WTC11 (cell line): ENCODE measurements at regions of chr19 and their contacts with region 1.

Region 1: DNA sequence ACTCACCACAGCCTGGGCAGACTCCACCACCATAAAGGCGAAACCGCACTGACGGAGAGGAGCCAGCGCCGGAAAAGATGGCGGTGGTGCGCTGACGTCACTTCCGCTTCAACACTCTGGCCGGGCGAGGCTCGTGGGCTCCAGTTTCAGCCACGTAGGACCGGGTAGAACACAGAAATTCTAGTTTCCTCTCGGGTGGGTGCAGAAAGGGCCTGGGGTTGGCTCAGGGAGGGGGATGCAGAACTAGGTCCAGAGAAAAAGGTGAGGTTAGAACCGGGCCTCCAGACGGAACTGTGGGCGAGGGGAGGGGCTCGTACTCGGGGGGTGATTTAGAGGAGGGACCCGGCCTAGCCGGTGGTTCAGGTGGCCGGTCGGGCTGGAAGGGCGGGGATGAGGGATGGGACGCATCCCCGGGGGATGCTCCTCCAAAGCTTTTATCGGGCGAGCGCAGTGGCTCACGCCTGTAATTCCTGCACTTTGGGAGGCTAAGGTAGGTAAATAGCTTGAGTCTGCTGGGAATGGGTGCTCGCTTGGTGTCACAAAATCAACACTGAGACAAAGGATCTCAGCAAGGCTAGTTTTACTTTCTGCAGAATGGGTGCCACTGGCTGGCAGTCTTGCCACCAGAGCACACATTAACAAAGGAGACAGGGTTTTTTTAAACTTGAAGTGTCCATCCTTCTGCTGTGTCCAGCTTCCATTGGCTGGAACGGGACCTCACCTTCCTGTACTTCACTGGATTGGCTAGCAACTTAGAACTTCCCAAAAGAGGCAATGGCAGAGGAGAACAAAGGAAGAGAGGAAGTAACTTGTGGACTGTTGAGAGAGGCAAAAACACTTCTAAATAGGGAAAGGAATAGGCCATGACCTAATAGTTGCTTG is at the start of gene ZNF561:
- DNase-seq: peak; percentile 79
- ATAC-seq: peak; percentile 75
- H3K4me3 Mint-ChIP-seq: peak within 1 kb of the TSS; percentile 94
- H3K27ac Mint-ChIP-seq: peak within 1 kb of the TSS; percentile 100
- H3K4me1 Mint-ChIP-seq: peaks cover 27% of the 10 kb centered on the region
- H3K27me3 Mint-ChIP-seq: no peaks in the 10 kb centered on the region
- CTCF ChIP-seq: no peak
- total RNA-seq, gene ZNF561: 39.2 to 67.9 TPM (median 40.7 TPM) in 3 replicates

Region 2: DNA sequence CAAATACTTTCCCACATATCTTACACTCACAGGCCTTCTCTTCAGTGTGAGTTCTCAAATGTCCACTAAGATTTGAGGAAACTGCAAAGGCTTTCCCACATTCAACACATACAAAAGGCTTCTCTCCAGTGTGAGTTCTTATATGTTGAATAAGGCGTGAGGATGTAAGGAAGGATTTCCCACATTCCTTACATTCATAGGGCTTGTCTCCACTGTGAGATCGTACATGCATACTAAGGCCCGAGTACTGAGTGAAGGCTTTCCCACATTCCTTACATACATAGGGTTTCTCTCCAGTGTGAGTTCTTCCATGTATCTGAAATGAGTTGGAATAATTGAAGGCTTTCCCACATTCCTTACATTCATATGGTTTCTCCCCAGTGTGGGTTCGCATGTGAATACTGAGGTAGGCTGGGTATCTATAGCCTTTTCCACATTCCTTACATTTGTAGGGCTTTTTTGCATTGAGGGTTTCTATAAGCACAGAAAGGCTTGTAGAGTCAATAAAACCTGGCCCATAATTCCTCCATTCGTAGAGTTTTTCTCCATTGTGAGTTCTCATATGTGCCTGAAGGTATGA is 92.5 kb before region 1 on chr19:
- CTCF ChIA-PET with region 1: no interaction called
- POLR2A ChIA-PET with region 1: no interaction called
- DNase-seq: no peak
- ATAC-seq: no peak
- H3K4me3 Mint-ChIP-seq: no peak overlapping the region
- H3K27ac Mint-ChIP-seq: no peak overlapping the region
- H3K4me1 Mint-ChIP-seq: no peaks in the 10 kb centered on the region
- H3K27me3 Mint-ChIP-seq: peaks cover 17% of the 10 kb centered on the region
- CTCF ChIP-seq: no peak

Region 3: DNA sequence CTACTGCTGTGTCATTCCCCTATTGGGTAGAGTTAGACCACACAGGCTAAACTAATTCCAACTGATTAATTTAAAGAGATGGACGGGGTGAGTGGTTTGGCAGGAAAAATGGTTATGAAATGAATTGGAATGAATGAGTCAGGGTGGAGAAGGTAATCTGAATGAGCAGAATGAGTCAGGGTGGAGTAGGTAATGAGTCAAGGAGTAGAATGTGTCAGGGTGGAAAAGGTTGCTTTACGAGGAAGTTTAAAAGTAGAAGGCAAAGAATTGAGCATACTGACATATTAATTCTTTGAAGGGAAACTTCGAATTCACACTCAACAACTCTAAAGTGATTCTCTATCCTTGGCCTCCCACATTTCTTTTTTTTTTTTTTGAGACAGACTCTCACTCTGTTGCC is 24.4 kb before region 1 on chr19:
- CTCF ChIA-PET with region 1: no interaction called
- POLR2A ChIA-PET with region 1: no interaction called
- DNase-seq: no peak
- ATAC-seq: no peak
- H3K4me3 Mint-ChIP-seq: no peak overlapping the region
- H3K27ac Mint-ChIP-seq: no peak overlapping the region
- H3K4me1 Mint-ChIP-seq: no peaks in the 10 kb centered on the region
- H3K27me3 Mint-ChIP-seq: peaks cover 36% of the 10 kb centered on the region
- CTCF ChIP-seq: no peak

Region 4: DNA sequence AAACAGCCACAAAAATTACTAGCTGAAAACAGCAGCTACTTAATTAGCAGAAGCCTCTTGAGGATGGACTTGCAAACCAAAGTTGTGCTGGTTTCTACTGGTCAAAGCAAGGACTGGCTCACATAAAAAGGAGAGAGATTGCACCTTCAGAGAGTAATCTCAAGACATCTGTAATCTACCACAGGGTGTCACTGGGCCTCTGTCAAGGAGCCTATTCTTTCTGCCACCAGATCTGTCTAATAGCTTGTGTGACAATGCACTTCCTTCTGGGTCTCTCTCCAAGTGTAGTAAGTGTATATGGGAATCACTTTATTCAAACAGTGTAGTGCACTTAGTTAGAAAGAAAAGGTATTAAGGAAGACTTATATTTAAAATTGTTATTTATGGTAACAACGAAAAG is 24.1 kb after region 1 on chr19:
- CTCF ChIA-PET with region 1: interaction called, 12 read pairs
- POLR2A ChIA-PET with region 1: no interaction called
- DNase-seq: no peak
- ATAC-seq: peak; percentile 52
- H3K4me3 Mint-ChIP-seq: no peak overlapping the region
- H3K27ac Mint-ChIP-seq: peak overlapping the region; percentile 45; the same call in 1 of the 2 replicates
- H3K4me1 Mint-ChIP-seq: peaks cover 34% of the 10 kb centered on the region
- H3K27me3 Mint-ChIP-seq: no peaks in the 10 kb centered on the region; the same call in 1 of the 2 replicates
- CTCF ChIP-seq: no peak

Region 5: DNA sequence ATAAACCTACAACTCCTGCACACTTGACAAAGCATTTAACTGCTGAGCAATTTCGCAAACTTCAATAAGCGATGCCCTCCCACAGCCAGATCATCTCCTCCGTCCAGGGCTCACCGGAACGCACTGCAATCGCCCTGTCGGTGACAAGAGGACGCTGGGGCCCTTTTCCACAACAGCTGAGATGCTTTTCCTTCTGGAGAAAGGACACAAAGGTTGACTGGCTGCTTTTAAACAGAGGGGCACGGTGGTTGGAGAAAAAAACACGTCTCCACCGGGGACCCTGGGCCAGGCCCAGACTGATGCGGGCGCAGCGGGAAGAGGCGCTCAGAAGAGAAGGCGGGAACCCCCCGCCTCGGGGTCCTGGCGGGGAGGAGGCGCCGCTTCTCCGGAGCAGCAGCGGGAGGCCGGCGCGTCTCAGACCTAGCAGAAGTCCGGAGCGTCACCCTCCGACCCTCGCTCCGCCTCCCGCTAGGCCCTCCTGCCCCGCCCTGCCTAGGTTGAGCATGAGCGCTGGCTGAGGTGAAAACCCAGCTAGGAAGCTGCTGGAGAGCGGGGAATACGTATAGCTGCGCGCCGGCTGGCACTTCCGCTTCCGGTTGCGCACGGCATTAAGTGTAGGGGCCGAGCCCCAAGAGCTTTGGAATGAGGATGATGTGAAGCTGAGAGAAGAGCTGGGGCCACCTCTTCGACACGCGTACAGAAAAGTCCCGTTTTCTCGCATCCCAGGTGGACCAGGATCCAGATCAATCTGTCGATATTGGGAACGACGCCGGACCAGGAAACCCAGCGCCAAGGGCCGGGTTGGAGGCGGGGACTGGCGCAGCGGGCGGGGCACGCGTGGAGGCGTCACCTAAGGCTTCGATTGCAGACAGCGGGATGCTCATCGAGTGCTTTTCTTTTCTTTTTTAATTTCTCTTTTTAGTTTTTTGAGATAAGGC is 147.0 kb after region 1 on chr19 and contains the start of gene ZNF846:
- CTCF ChIA-PET with region 1: interaction called, 19 read pairs
- POLR2A ChIA-PET with region 1: no interaction called
- DNase-seq: peak; percentile 96
- ATAC-seq: peak; percentile 98
- H3K4me3 Mint-ChIP-seq: peak within 1 kb of the TSS; percentile 94
- H3K27ac Mint-ChIP-seq: peak within 1 kb of the TSS; percentile 97
- H3K4me1 Mint-ChIP-seq: no peaks in the 10 kb centered on the region
- H3K27me3 Mint-ChIP-seq: no peaks in the 10 kb centered on the region
- CTCF ChIP-seq: no peak
- total RNA-seq, gene ZNF846: 11.2 to 12.2 TPM (median 11.6 TPM) in 3 replicates